Mammary epithelial cell (primary cell): ENCODE measurements at regions of chr2 and their contacts with region 1.

Region 1: GRCh38 chr2:45765728-45766254 is 114.3 kb downstream of the PRKCE start:
- DNase-seq: no peak
- H3K4me3 ChIP-seq: no peak overlapping the region
- H3K27ac ChIP-seq: no peak overlapping the region
- H3K4me1 ChIP-seq: no peaks in the 10 kb centered on the region
- H3K27me3 ChIP-seq: no peaks in the 10 kb centered on the region
- CTCF ChIP-seq: no peak

Region 2: DNA sequence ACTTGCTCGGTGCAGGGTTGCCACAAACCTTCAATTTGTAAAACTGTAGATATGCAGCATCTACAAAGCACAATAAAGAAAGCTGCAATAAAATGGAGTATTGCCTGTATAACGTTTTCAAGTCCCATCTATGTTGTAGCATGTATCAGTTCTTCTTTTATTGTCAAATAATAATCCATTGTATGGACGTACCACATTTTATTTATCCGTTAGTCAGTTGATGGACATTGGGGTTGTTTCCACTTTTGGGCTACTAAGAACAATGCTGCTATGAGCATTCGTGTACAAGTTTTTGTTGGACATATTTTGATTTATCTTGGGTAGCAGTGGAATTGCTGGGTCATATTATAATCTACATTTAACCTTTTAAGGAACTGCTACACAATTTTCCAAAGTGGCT is 1065.0 kb before region 1 on chr2:
- CTCF ChIA-PET with region 1: no interaction called
- dilution Hi-C with region 1: no loop called
- in situ Hi-C with region 1: no loop called
- intact Hi-C with region 1: no loop called
- DNase-seq: no peak
- H3K4me3 ChIP-seq: no peak overlapping the region
- H3K27ac ChIP-seq: no peak overlapping the region
- H3K4me1 ChIP-seq: no peaks in the 10 kb centered on the region
- H3K27me3 ChIP-seq: no peaks in the 10 kb centered on the region
- CTCF ChIP-seq: no peak

Region 3: DNA sequence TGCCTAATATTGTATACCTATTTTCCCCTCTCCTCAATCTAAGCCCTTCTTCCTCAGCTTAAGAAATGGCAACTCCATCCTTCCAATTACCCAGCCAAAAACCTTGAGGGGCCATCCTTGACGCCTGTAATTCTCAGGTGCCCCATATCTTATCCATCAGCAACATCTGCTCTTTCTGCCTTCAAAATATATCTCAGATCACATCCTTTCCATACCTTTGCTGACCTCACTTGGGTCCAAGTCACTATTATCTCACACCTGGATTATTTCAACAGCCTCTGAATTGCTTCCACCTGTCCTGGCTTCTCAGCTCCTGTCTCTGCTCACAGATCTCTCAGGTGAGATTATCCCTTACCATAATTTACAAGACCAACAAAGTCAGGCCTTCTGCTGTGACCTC is 106.6 kb before region 1 on chr2:
- CTCF ChIA-PET with region 1: no interaction called
- dilution Hi-C with region 1: loop called (anchors 5 kb)
- in situ Hi-C with region 1: no loop called
- intact Hi-C with region 1: no loop called
- DNase-seq: no peak
- H3K4me3 ChIP-seq: no peak overlapping the region
- H3K27ac ChIP-seq: no peak overlapping the region
- H3K4me1 ChIP-seq: no peaks in the 10 kb centered on the region
- H3K27me3 ChIP-seq: no peaks in the 10 kb centered on the region
- CTCF ChIP-seq: no peak

Region 4: GRCh38 chr2:45706033-45706432 is 59.8 kb before region 1 on chr2:
- CTCF ChIA-PET with region 1: no interaction called
- dilution Hi-C with region 1: loop called (anchors 5 kb)
- in situ Hi-C with region 1: no loop called
- intact Hi-C with region 1: no loop called
- DNase-seq: no peak
- H3K4me3 ChIP-seq: no peak overlapping the region
- H3K27ac ChIP-seq: no peak overlapping the region
- H3K4me1 ChIP-seq: no peaks in the 10 kb centered on the region
- H3K27me3 ChIP-seq: no peaks in the 10 kb centered on the region
- CTCF ChIP-seq: no peak

Region 5: GRCh38 chr2:45806563-45807358 is 41.0 kb after region 1 on chr2:
- CTCF ChIA-PET with region 1: no interaction called
- dilution Hi-C with region 1: loop called (anchors 5 kb)
- in situ Hi-C with region 1: no loop called
- intact Hi-C with region 1: no loop called
- DNase-seq: no peak
- H3K4me3 ChIP-seq: no peak overlapping the region
- H3K27ac ChIP-seq: no peak overlapping the region
- H3K4me1 ChIP-seq: peaks cover under 1% of the 10 kb centered on the region
- H3K27me3 ChIP-seq: no peaks in the 10 kb centered on the region
- CTCF ChIP-seq: no peak